ENCODE measurements at regions of chr1 and their contacts with region 1.

Region 1: GRCh38 chr1:156927215-156928042 is 7.0 kb downstream of the LRRC71 start:
- DNase-seq: peak; percentile 79
- H3K4me3 ChIP-seq: peak overlapping the region in 3 of 4 donors; percentile 14 to 37 (median 28)
- H3K27ac ChIP-seq: no peak overlapping the region
- H3K4me1 ChIP-seq: peaks cover 0 to 35% (median 34%) of the 10 kb centered on the region in 4 donors
- H3K27me3 ChIP-seq: peaks cover 35 to 69% (median 51%) of the 10 kb centered on the region in 3 donors
- CTCF ChIP-seq: peak in 3 of 4 experiments; percentile 22 to 45 (median 42)
- EP300 ChIP-seq: no peak
- POLR2A ChIP-seq: no peak

Region 2: DNA sequence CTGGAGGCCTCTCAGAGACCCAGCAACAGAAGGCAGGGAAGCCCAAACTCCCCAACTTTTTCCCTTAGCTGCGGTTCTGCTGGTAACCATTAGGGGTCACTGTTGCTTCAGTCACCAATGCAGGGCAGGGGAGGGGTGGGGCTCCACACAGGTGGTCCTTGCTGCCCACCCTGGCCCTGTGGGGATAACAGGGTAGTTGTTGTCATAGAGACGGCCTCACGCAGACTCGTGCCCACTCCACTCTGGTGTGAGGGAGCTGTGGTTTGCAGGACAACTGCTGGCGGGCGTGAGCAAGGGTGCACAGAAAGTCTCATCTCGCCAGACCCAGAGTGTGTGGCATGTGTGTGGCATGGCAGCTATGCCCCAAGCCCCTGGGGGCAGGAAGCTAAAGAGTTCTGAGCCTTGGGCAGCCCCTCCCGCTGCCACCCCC is 88.4 kb before region 1 on chr1:
- intact Hi-C with region 1: loop called (anchors 10 kb)
- DNase-seq: no peak
- H3K4me3 ChIP-seq: no peak overlapping the region
- H3K27ac ChIP-seq: no peak overlapping the region
- H3K4me1 ChIP-seq: no peaks in the 10 kb centered on the region
- H3K27me3 ChIP-seq: peaks cover 0 to 71% (median 10%) of the 10 kb centered on the region in 3 donors
- CTCF ChIP-seq: peak; percentile 36 to 83 (median 66)
- EP300 ChIP-seq: no peak
- POLR2A ChIP-seq: no peak

Region 3: DNA sequence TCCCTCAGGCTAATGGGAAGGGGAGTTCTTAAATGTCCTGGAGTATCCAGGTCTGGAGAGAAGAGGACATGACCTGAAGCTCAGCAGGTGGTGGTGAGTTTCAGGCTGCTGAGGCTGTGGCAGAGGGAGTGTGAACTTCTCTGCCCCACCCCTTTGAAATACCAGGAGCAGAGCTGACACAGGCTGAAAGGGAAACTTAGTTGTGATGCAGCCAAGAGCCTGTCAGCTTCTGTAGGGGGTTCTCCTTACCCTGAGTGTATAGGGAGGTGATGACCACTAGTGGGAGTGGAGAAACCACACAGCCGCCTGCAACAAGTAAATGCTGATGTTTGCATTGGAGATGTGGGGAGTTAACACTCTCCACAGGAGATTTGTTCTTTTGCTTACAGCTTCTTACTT is 472.6 kb after region 1 on chr1:
- intact Hi-C with region 1: no loop called
- DNase-seq: no peak
- H3K4me3 ChIP-seq: no peak overlapping the region
- H3K27ac ChIP-seq: no peak overlapping the region
- H3K4me1 ChIP-seq: peaks cover 0 to 14% (median 10%) of the 10 kb centered on the region in 4 donors
- H3K27me3 ChIP-seq: no peaks in the 10 kb centered on the region
- CTCF ChIP-seq: no peak
- EP300 ChIP-seq: no peak
- POLR2A ChIP-seq: no peak